ENCODE measurements at regions of chr12 and their contacts with region 1.

Region 1: DNA sequence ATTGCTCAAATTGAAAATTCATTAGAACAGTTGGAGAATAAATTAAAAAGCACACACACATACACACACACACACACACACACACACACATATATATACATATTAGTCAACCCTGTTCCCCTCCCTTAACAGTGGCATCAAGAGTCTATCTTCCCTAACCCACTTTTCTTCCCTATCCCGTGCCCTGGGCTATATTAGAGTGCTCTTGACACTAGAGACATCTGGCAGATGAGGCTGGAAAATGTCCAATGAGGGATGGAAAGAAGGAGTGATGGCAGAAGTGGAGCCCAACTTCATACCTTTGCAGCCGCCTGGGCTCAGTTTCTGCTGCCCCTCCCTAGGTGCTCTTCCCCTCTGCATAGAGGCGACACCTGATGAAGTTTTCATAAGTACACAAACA is 172.4 kb upstream of the NUDT4 start:
- DNase-seq: no peak
- ATAC-seq: no peak
- H3K4me3 ChIP-seq: no peak overlapping the region
- H3K27ac ChIP-seq: no peak overlapping the region
- H3K4me1 ChIP-seq: no peaks in the 10 kb centered on the region
- H3K27me3 ChIP-seq: no peaks in the 10 kb centered on the region
- CTCF ChIP-seq: no peak

Region 2: DNA sequence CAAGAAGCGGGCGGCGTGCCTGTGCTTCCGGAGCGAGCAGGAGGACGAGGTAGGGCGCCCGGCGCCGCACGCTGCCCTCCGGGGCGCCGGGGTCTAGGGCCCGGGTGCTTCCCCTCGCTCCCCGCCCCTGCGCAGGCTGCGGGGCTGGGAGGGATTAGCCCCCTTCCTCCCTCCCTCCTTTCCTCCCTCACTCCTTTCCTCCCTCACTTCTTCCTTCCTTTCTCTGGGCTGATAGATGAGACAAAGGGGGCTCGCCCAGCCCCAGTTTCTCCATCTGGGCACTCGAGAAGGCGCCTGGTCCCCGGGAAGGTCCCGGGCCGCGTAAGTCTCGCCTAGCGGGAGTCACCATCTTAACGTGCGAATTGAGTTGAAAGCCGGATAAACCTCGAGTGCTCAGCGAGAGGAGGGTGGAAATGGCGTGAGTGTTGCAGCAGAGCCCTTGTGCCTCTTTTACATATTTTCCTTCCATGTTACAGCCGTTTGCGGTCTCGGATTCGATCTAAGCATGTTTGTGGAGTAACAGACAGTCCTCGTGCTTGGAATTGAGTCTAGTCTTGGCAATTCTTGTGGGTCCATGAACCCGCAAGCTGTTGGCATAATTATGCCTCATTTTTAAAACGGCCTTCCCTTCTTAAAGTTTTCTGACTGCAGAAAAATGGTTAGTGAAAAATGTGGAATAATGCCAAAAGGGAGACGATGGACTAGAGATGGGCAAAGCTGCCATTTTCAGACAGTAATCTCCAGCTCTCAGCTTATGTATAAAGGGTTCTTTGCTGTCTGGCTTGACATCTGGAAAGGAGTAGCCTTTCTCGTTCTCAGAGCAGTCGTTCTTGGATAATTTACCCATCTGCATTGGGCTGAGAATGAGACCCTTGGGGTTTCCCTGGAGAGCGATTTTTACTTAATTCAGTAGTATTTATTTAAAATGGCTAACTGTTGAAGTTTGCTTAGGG is 173.3 kb after region 1 on chr12:
- CTCF ChIA-PET with region 1: no interaction called
- POLR2A ChIA-PET with region 1: interaction called, 13 read pairs
- in situ Hi-C with region 1: no loop called
- intact Hi-C with region 1: no loop called
- DNase-seq: no peak
- ATAC-seq: peak; percentile 14
- H3K4me3 ChIP-seq: peak overlapping the region; percentile 93 to 100
- H3K27ac ChIP-seq: peak overlapping the region; percentile 92
- H3K4me1 ChIP-seq: peaks cover 27% of the 10 kb centered on the region
- H3K27me3 ChIP-seq: no peaks in the 10 kb centered on the region
- CTCF ChIP-seq: no peak

Measured in Panc1 (cell line).